ENCODE measurements at regions of chr18 and their contacts with region 1.

Region 1: DNA sequence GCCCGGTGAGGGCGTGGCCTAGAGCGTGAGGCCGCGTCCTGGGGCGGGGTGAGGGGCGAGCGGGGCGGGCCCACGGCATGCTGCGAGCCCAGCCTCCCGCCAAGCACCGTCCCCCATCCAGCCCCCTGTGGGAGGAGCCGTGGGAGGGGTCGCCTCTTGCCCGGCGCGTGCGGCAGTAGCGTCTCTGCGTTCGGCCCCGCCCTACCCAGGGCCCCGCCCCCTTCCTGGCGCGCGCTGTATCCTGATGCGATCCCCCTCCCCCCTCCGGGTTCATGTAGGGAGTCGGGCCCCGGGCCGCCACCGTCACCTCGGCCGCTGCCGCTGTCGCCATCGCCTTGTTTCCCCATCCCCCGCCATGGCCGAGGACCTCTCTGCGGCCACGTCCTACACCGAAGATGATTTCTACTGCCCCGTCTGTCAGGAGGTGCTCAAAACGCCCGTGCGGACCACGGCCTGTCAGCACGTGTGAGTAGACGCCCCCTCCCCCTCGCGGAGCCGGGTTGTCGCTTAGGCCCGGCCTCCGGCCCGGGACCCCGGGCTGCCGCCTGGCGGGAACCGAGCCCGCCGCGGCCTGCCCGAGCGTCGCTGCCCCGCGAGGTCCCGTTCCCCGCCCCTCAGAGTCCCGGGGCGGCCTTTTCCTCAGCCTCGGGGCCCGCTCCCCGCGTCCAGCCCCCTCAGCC is 888 bp downstream of the RNF138 start:
- DNase-seq: peak; percentile 99
- H3K4me3 Mint-ChIP-seq: peak overlapping the region; percentile 95
- H3K27ac Mint-ChIP-seq: peak overlapping the region; percentile 95
- H3K4me1 Mint-ChIP-seq: peaks cover 41% of the 10 kb centered on the region
- H3K27me3 Mint-ChIP-seq: peaks cover 3% of the 10 kb centered on the region

Region 2: DNA sequence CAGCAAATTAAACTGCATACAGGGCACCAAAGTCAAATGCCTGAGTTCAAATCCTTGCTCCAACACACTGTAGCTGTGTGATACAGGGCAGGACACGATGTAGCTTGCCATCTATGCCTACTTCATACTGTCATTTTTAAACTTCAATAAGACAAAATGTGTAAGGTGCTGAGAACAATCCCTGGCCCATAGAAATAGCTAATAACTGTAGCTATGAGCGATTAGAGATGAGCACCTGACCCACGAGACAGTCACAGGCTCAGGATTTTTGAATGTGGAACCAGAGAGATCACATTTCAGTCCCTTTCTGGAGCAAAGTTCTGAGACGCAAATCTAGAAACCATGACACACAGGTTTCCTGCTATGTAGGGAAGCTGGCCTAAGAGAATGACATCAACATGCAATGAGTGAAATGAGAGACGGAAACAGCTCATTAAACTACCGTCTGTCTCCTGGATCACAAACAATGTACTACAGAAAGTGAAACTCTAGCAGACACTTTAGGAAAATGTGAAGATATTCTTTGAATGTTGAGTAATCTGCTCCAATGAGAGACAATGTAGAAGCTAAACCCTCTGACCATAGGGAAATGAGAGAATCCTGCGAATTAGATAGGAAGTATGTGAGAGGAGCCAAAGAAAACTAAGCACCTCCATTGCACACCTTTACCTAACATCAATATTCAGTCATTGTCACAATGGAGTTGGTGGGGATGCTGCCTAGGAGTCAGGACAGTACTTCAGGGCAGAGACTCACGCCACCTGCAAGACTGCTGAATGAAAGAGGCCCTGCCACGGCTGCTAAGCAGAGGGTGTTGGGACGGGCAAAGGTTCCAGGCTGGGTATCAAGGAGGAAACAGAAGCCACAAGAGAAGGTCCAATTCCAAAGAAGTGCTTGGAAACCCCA is 433.6 kb before region 1 on chr18:
- intact Hi-C with region 1: loop called (anchors 5 kb)
- DNase-seq: peak; percentile 7
- H3K4me3 Mint-ChIP-seq: peak overlapping the region; percentile 20
- H3K27ac Mint-ChIP-seq: peak overlapping the region; percentile 74
- H3K4me1 Mint-ChIP-seq: peaks cover 21% of the 10 kb centered on the region
- H3K27me3 Mint-ChIP-seq: peaks cover 2% of the 10 kb centered on the region

Region 3: GRCh38 chr18:31672628-31673135 is 419.9 kb before region 1 on chr18:
- intact Hi-C with region 1: no loop called
- DNase-seq: no peak
- H3K4me3 Mint-ChIP-seq: no peak overlapping the region
- H3K27ac Mint-ChIP-seq: no peak overlapping the region
- H3K4me1 Mint-ChIP-seq: no peaks in the 10 kb centered on the region
- H3K27me3 Mint-ChIP-seq: peaks cover 16% of the 10 kb centered on the region

Region 4: GRCh38 chr18:31942999-31943865 is 149.3 kb before region 1 on chr18 and contains the start of gene TRAPPC8:
- intact Hi-C with region 1: loop called (anchors 1 kb)
- DNase-seq: peak; percentile 86
- H3K4me3 Mint-ChIP-seq: peak within 1 kb of the TSS; percentile 97
- H3K27ac Mint-ChIP-seq: peak within 1 kb of the TSS; percentile 95
- H3K4me1 Mint-ChIP-seq: peaks cover 40% of the 10 kb centered on the region
- H3K27me3 Mint-ChIP-seq: no peaks in the 10 kb centered on the region
- total RNA-seq, gene TRAPPC8: 36.7 and 41.6 TPM in 2 replicates

Region 5: GRCh38 chr18:32040936-32041335 is 51.6 kb before region 1 on chr18:
- intact Hi-C with region 1: loop called (anchors 1 kb)
- DNase-seq: peak; percentile 49
- H3K4me3 Mint-ChIP-seq: peak overlapping the region; percentile 73
- H3K27ac Mint-ChIP-seq: peak overlapping the region; percentile 95
- H3K4me1 Mint-ChIP-seq: peaks cover 48% of the 10 kb centered on the region
- H3K27me3 Mint-ChIP-seq: no peaks in the 10 kb centered on the region

Region 6: DNA sequence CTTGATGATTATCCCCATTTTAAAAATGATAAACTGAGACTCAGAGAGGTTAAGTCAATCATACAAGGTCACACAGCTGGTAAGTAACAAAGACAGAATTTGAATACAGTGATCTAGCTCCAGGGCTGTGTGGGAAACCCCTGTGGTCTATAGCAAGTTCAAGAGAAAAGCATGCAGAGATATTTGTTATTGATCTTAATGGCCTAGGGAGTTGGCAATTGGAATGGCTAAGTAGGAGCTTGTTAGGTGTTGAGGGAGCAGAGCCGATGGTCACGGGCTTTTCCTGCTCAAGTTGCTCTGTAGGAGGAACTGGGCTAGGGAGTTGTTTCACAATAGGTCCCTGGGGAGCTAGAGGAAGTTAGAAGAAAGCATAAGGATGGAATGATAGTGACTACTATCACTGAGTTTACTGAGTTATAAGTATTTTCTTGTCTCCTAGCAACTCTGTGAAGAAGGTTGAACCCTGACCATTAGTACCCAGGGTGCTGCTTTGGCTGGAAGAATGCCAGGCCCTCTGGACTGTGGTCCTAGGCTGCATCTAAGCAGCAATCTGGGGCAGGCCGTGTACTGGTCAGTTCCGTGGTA is 44.0 kb before region 1 on chr18:
- intact Hi-C with region 1: loop called (anchors 2 kb)
- DNase-seq: peak; percentile 6
- H3K4me3 Mint-ChIP-seq: peak overlapping the region; percentile 30
- H3K27ac Mint-ChIP-seq: peak overlapping the region; percentile 84
- H3K4me1 Mint-ChIP-seq: peaks cover 30% of the 10 kb centered on the region
- H3K27me3 Mint-ChIP-seq: no peaks in the 10 kb centered on the region

Region 7: GRCh38 chr18:32060026-32060425 is 32.5 kb before region 1 on chr18:
- intact Hi-C with region 1: no loop called
- DNase-seq: no peak
- H3K4me3 Mint-ChIP-seq: no peak overlapping the region
- H3K27ac Mint-ChIP-seq: no peak overlapping the region
- H3K4me1 Mint-ChIP-seq: peaks cover 34% of the 10 kb centered on the region
- H3K27me3 Mint-ChIP-seq: no peaks in the 10 kb centered on the region

Region 8: GRCh38 chr18:32072321-32072720 is 20.2 kb before region 1 on chr18:
- intact Hi-C with region 1: loop called (anchors 2 kb)
- DNase-seq: no peak
- H3K4me3 Mint-ChIP-seq: no peak overlapping the region
- H3K27ac Mint-ChIP-seq: no peak overlapping the region
- H3K4me1 Mint-ChIP-seq: peaks cover 22% of the 10 kb centered on the region
- H3K27me3 Mint-ChIP-seq: no peaks in the 10 kb centered on the region

Region 9: DNA sequence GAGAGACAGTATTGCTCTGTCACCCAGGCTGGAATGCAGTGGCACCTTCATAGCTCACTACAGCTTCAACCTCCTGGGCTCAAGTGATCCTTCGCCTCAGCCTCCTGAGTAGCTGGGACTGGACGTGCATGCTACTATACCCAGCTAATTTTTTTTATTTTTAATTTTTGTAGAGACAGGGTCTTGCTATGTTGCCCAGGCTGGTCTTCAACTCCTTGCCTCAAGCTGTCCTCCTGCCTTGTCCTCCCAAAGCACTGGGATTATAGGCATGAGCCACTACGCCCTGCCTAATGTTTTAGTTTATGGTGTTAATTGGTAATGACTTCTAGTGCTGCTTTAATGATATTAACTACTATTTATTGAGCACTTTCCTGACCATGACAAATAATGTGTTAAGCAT is 17.4 kb after region 1 on chr18:
- intact Hi-C with region 1: no loop called
- DNase-seq: no peak
- H3K4me3 Mint-ChIP-seq: no peak overlapping the region
- H3K27ac Mint-ChIP-seq: no peak overlapping the region
- H3K4me1 Mint-ChIP-seq: peaks cover 45% of the 10 kb centered on the region
- H3K27me3 Mint-ChIP-seq: no peaks in the 10 kb centered on the region

Region 10: DNA sequence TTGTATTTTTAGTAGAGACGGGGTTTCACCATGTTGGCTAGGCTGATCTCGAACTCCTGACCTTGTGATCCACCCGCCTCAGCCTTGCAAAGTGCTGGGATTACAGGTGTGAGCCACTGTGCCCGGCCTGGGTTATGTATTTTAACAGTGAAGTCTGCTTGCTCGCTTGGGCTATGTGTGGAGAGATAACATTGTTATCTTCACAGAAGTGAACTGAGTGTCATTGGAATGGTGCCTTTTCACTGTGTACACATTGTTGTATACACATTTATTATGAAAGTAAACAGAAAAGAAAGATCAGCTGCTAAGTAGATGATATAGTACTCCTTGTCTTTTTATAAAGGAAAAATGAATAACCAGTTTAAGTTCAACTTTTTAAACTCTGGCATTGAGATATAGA is 29.5 kb after region 1 on chr18:
- intact Hi-C with region 1: loop called (anchors 5 kb)
- DNase-seq: no peak
- H3K4me3 Mint-ChIP-seq: no peak overlapping the region
- H3K27ac Mint-ChIP-seq: no peak overlapping the region
- H3K4me1 Mint-ChIP-seq: peaks cover 16% of the 10 kb centered on the region
- H3K27me3 Mint-ChIP-seq: no peaks in the 10 kb centered on the region

Region 11: DNA sequence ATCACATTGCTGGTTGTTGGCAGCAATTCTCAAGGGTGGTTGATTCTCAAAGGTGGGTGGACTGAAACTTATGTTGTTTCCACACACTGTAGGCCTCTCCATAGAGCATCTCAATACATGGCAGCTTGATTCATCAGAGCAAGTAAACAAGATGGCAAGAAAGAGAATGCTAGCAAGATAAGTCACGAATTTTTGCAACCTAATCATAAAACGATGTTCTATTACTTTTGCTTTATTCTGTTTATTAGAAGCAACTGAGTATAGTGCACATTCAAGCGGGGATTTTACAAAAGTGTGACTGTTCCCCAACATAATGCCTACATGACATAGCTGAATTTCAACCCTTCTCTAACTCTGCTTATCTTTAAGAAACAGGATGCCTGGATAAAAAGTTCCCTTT is 1211.7 kb after region 1 on chr18:
- intact Hi-C with region 1: no loop called
- DNase-seq: no peak
- H3K4me3 Mint-ChIP-seq: no peak overlapping the region
- H3K27ac Mint-ChIP-seq: no peak overlapping the region
- H3K4me1 Mint-ChIP-seq: no peaks in the 10 kb centered on the region
- H3K27me3 Mint-ChIP-seq: no peaks in the 10 kb centered on the region